GM12878 (cell line): ENCODE measurements at regions of chr9 and their contacts with region 1.

Region 1: GRCh38 chr9:84697509-84698114 is 28.1 kb downstream of the NTRK2 start:
- DNase-seq: no peak
- ATAC-seq: peak; percentile 71
- H3K4me3 ChIP-seq: no peak overlapping the region
- H3K27ac ChIP-seq: no peak overlapping the region
- H3K4me1 ChIP-seq: peaks cover 26% of the 10 kb centered on the region
- H3K27me3 ChIP-seq: no peaks in the 10 kb centered on the region
- CTCF ChIP-seq: peak; percentile 88 to 96 (median 94)
- EP300 ChIP-seq: no peak
- POLR2A ChIP-seq: no peak
- RAD21 ChIP-seq: peak; percentile 90

Region 2: DNA sequence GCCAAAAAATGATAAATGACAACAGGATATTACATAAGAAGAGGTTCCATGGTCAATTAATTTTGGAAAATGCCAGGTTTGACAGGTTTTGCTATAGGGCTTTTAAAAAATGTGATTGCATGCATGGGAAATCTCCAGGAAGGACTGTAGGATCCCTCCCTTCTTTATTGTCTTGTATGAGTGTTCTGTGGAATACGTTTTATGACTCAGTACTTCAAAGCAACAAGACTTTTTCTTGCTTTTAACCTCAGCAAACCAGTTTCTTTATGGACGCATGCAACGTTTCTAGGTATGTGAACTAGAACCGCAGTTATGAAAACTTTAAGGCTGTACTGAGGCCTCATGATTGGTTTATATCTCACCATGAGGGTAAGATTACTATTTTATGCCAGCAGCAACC is 104.7 kb before region 1 on chr9:
- CTCF ChIA-PET with region 1: no interaction called
- POLR2A ChIA-PET with region 1: no interaction called
- RAD21 ChIA-PET with region 1: no interaction called
- SMC1A ChIA-PET with region 1: no interaction called
- in situ Hi-C with region 1: no loop called
- intact Hi-C with region 1: no loop called
- DNase-seq: no peak
- ATAC-seq: no peak
- H3K4me3 ChIP-seq: no peak overlapping the region
- H3K27ac ChIP-seq: no peak overlapping the region
- H3K4me1 ChIP-seq: no peaks in the 10 kb centered on the region
- H3K27me3 ChIP-seq: peaks cover 0 to 2% of the 10 kb centered on the region in 2 experiments; a peak in 1 of 4 replicates
- CTCF ChIP-seq: no peak
- EP300 ChIP-seq: no peak
- POLR2A ChIP-seq: no peak
- RAD21 ChIP-seq: no peak

Region 3: DNA sequence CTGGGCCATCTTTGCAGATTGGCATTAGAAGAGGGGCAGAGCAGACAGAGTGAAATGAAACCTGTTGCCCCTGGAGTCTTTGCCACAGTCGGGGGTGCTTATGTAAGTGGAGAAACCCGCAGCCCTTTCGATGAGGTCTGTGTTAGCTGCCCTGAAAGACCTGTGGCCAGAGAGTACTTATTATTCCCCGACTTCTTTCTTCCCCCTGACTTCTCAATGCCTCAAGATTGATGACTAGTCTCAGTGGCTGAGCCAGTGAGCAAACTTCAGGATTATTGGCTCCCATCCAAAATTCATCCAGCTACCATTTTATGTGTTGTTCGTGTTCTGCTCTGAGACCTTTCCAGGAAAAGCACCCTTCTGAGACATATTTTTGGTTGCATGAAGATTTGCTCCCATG is 20.5 kb before region 1 on chr9:
- CTCF ChIA-PET with region 1: interaction called, 6 read pairs
- POLR2A ChIA-PET with region 1: no interaction called
- RAD21 ChIA-PET with region 1: interaction called, 5 read pairs
- SMC1A ChIA-PET with region 1: interaction called, 16 read pairs
- in situ Hi-C with region 1: no loop called
- intact Hi-C with region 1: no loop called
- DNase-seq: no peak
- ATAC-seq: peak; percentile 80
- H3K4me3 ChIP-seq: no peak overlapping the region
- H3K27ac ChIP-seq: no peak overlapping the region
- H3K4me1 ChIP-seq: no peaks in the 10 kb centered on the region
- H3K27me3 ChIP-seq: no peaks in the 10 kb centered on the region
- CTCF ChIP-seq: no peak
- EP300 ChIP-seq: no peak
- POLR2A ChIP-seq: no peak
- RAD21 ChIP-seq: no peak

Region 4: GRCh38 chr9:84748112-84748511 is 50.5 kb after region 1 on chr9:
- CTCF ChIA-PET with region 1: interaction called, 177 read pairs
- POLR2A ChIA-PET with region 1: interaction called, 18 read pairs
- RAD21 ChIA-PET with region 1: interaction called, 20 read pairs
- SMC1A ChIA-PET with region 1: interaction called, 165 read pairs
- in situ Hi-C with region 1: loop called (anchors 10 kb)
- intact Hi-C with region 1: loop called (anchors 2 kb)
- DNase-seq: peak; percentile 66
- ATAC-seq: peak; percentile 73
- H3K4me3 ChIP-seq: no peak overlapping the region; the same call in 1 of the 2 replicates
- H3K27ac ChIP-seq: peak overlapping the region; percentile 73
- H3K4me1 ChIP-seq: peaks cover 42% of the 10 kb centered on the region
- H3K27me3 ChIP-seq: no peaks in the 10 kb centered on the region
- CTCF ChIP-seq: no peak
- EP300 ChIP-seq: peak; percentile 51 to 71; a peak in 2 of 4 replicates
- POLR2A ChIP-seq: no peak
- RAD21 ChIP-seq: no peak

Region 5: GRCh38 chr9:84788803-84789473 is 91.3 kb after region 1 on chr9:
- CTCF ChIA-PET with region 1: interaction called, 792 read pairs
- POLR2A ChIA-PET with region 1: interaction called, 3 read pairs
- RAD21 ChIA-PET with region 1: interaction called, 582 read pairs
- SMC1A ChIA-PET with region 1: interaction called, 686 read pairs
- in situ Hi-C with region 1: no loop called
- intact Hi-C with region 1: no loop called
- DNase-seq: no peak
- ATAC-seq: no peak
- H3K4me3 ChIP-seq: no peak overlapping the region
- H3K27ac ChIP-seq: no peak overlapping the region
- H3K4me1 ChIP-seq: no peaks in the 10 kb centered on the region
- H3K27me3 ChIP-seq: no peaks in the 10 kb centered on the region
- CTCF ChIP-seq: no peak
- EP300 ChIP-seq: no peak
- POLR2A ChIP-seq: no peak
- RAD21 ChIP-seq: no peak

Region 6: GRCh38 chr9:85142968-85143367 is 445.4 kb after region 1 on chr9:
- CTCF ChIA-PET with region 1: interaction called, 73 read pairs
- POLR2A ChIA-PET with region 1: no interaction called
- RAD21 ChIA-PET with region 1: interaction called, 16 read pairs
- SMC1A ChIA-PET with region 1: interaction called, 47 read pairs
- in situ Hi-C with region 1: loop called (anchors 10 kb)
- intact Hi-C with region 1: loop called (anchors 10 kb)
- DNase-seq: peak; percentile 16
- ATAC-seq: peak; percentile 84
- H3K4me3 ChIP-seq: no peak overlapping the region
- H3K27ac ChIP-seq: no peak overlapping the region
- H3K4me1 ChIP-seq: no peaks in the 10 kb centered on the region
- H3K27me3 ChIP-seq: peaks cover 0 to 3% of the 10 kb centered on the region in 2 experiments; a peak in 1 of 4 replicates
- CTCF ChIP-seq: peak; percentile 63 to 81 (median 76)
- EP300 ChIP-seq: no peak
- POLR2A ChIP-seq: no peak
- RAD21 ChIP-seq: peak; percentile 87